Tibial artery (tissue), 4 donors: ENCODE measurements at regions of chr2 and their contacts with region 1.

Region 1: GRCh38 chr2:218269899-218270720 is at the starts of genes AAMP and PNKD:
- DNase-seq: peak; percentile 100
- H3K4me3 ChIP-seq: peak within 1 kb of the TSS; percentile 77 to 79
- H3K27ac ChIP-seq: peak within 1 kb of the TSS; percentile 80 to 99
- H3K4me1 ChIP-seq: peaks cover 0 to 48% (median 38%) of the 10 kb centered on the region in 4 donors
- H3K27me3 ChIP-seq: no peaks in the 10 kb centered on the region
- CTCF ChIP-seq: peak in 1 of 2 experiments; percentile 26

Region 2: GRCh38 chr2:218186355-218186766 is 83.7 kb before region 1 on chr2:
- intact Hi-C with region 1: loop called (anchors 5 kb)
- DNase-seq: peak; percentile 71 to 73
- H3K4me3 ChIP-seq: no peak overlapping the region
- H3K27ac ChIP-seq: no peak overlapping the region
- H3K4me1 ChIP-seq: peaks cover 0 to 16% (median 5%) of the 10 kb centered on the region in 4 donors
- H3K27me3 ChIP-seq: no peaks in the 10 kb centered on the region
- CTCF ChIP-seq: peak; percentile 72 to 81

Region 3: GRCh38 chr2:218216674-218217359 is 53.3 kb before region 1 on chr2 and contains the start of gene ARPC2:
- intact Hi-C with region 1: loop called (anchors 10 kb)
- DNase-seq: peak; percentile 92 to 96
- H3K4me3 ChIP-seq: peak within 1 kb of the TSS; percentile 98 to 99
- H3K27ac ChIP-seq: peak within 1 kb of the TSS; percentile 94 to 99
- H3K4me1 ChIP-seq: peaks cover 0 to 45% (median 39%) of the 10 kb centered on the region in 4 donors
- H3K27me3 ChIP-seq: no peaks in the 10 kb centered on the region
- CTCF ChIP-seq: peak; percentile 24 to 51

Region 4: GRCh38 chr2:218357236-218358159 is 87.4 kb after region 1 on chr2:
- intact Hi-C with region 1: loop called (anchors 2 kb)
- DNase-seq: no peak
- H3K4me3 ChIP-seq: no peak overlapping the region
- H3K27ac ChIP-seq: no peak overlapping the region
- H3K4me1 ChIP-seq: peaks cover 0 to 13% (median 6%) of the 10 kb centered on the region in 4 donors
- H3K27me3 ChIP-seq: no peaks in the 10 kb centered on the region
- CTCF ChIP-seq: no peak

Region 5: DNA sequence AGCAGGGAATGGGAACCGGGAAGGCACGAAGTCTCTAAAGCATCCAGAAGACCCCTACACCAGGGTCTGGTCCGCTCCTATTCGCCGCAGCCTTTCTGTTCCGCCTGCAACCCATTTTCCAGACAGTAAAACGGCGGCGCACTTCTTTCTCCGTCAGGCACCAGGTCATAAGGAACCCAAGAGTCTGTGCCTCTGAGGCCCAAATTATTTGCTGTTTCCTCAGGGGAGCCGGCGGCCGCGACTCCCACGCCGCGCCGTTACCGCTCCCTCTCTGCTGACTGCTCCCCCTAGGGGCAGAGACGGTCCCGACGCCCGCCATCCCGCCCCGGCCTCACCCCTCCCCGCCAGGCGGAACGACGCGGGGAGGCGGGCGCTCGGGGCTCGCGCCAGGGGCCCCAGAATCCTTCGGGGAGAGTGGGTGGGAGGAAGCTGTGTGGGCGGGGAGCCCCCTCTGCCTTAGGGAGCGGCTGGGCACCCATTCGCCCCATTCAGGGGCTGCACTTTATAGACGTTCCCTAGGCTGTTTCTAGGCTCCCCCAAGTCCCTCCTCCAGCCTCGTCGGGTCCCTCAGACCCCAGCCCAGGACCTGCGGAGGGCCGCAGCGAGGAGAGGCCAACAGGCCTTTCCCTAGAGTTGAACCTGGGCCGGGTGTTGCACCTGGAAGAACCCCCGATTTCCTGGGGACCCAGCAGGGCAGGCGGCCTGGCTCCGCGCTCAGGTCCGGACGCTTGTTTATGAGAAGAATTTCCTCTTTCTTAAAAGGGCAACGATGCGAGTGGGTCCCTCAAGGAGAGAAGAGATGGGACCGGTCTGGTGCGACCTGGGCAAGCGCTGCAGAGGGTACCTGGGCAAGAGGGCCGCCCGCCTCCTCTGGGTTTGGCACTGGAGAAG is 125.9 kb after region 1 on chr2:
- intact Hi-C with region 1: loop called (anchors 1 kb)
- DNase-seq: peak; percentile 92 to 97
- H3K4me3 ChIP-seq: peak overlapping the region; percentile 91 to 99
- H3K27ac ChIP-seq: peak overlapping the region; percentile 100
- H3K4me1 ChIP-seq: peaks cover 0 to 21% (median 11%) of the 10 kb centered on the region in 4 donors
- H3K27me3 ChIP-seq: no peaks in the 10 kb centered on the region
- CTCF ChIP-seq: peak; percentile 95